ENCODE measurements at regions of chr3 and their contacts with region 1.

Region 1: GRCh38 chr3:20511863-20512505 is 326.0 kb upstream of the SGO1 start:
- DNase-seq: no peak
- ATAC-seq: peak; percentile 98
- H3K4me3 ChIP-seq: no peak overlapping the region
- H3K27ac ChIP-seq: no peak overlapping the region
- H3K4me1 ChIP-seq: no peaks in the 10 kb centered on the region
- H3K27me3 ChIP-seq: no peaks in the 10 kb centered on the region
- CTCF ChIP-seq: peak; percentile 64 to 67 (median 67); a peak in 5 of 6 replicates
- EP300 ChIP-seq: no peak
- POLR2A ChIP-seq: no peak
- RAD21 ChIP-seq: peak; percentile 86

Region 2: DNA sequence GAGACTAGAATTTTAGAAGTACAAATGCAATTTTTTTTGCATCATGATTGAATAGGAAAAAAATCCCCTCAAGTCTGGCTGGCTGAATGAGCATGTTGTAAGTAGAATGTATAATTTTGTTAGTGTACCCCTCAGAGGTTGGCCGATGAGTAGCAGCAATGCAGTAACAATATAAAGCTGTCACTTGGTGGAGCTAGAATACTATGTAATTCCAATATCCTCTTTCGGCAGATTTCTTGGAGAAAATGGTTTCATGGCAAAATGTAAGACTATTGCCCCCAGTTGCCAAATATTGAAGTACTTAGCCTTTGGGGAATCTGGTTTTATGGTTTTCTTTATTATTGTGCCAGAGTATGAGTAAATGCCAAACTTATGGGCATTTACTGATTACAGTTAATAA is 286.2 kb before region 1 on chr3:
- CTCF ChIA-PET with region 1: interaction called, 3 read pairs
- POLR2A ChIA-PET with region 1: no interaction called
- RAD21 ChIA-PET with region 1: no interaction called
- SMC1A ChIA-PET with region 1: no interaction called
- in situ Hi-C with region 1: no loop called
- intact Hi-C with region 1: loop called (anchors 10 kb)
- DNase-seq: no peak
- ATAC-seq: peak; percentile 66
- H3K4me3 ChIP-seq: no peak overlapping the region
- H3K27ac ChIP-seq: no peak overlapping the region
- H3K4me1 ChIP-seq: no peaks in the 10 kb centered on the region
- H3K27me3 ChIP-seq: no peaks in the 10 kb centered on the region
- CTCF ChIP-seq: peak; percentile 25 to 52 (median 40); a peak in 4 of 6 replicates
- EP300 ChIP-seq: no peak
- POLR2A ChIP-seq: no peak
- RAD21 ChIP-seq: peak; percentile 73

Region 3: DNA sequence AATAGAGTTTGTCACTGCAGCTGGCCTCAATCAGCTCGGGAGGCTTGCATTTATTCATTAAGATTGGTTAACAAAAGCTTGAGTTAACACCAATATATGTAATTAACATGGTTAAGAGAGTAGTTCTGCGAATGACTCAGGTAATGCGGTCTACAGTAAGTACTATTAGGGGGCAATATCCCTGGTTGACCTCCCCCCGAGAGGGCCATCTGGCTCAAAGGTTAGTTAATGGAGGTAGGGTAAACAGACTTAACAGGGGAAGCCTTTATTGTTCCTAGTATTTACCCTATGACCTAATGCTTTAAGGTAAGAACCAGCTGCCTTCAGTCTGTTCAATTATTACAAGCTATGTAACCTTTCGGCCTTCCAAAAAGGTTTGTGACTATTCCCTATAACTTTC is 77.3 kb after region 1 on chr3:
- CTCF ChIA-PET with region 1: no interaction called
- POLR2A ChIA-PET with region 1: no interaction called
- RAD21 ChIA-PET with region 1: no interaction called
- SMC1A ChIA-PET with region 1: no interaction called
- in situ Hi-C with region 1: no loop called
- intact Hi-C with region 1: no loop called
- DNase-seq: no peak
- ATAC-seq: no peak
- H3K4me3 ChIP-seq: no peak overlapping the region
- H3K27ac ChIP-seq: no peak overlapping the region
- H3K4me1 ChIP-seq: no peaks in the 10 kb centered on the region
- H3K27me3 ChIP-seq: no peaks in the 10 kb centered on the region
- CTCF ChIP-seq: no peak
- EP300 ChIP-seq: no peak
- POLR2A ChIP-seq: no peak
- RAD21 ChIP-seq: no peak

Region 4: DNA sequence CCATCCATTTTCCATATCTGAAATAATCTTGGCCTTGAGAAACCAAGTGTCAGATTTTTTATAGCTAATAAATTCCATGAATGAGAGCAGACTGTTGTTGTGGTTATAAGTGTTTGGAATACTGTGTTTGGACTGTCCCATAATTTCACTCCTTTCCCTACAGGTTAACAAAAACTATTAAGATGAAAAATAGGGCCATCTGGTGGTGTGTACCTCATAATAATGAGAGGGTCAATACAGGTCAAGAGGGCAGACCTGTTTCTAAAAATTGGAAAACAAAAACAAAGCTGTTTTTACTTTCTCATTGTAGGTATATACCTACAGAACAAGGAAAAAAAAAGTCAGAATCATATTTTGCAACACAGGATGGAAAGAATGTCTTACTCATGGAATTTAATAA is 227.8 kb after region 1 on chr3:
- CTCF ChIA-PET with region 1: no interaction called
- POLR2A ChIA-PET with region 1: no interaction called
- RAD21 ChIA-PET with region 1: no interaction called
- SMC1A ChIA-PET with region 1: no interaction called
- in situ Hi-C with region 1: no loop called
- intact Hi-C with region 1: loop called (anchors 5 kb)
- DNase-seq: no peak
- ATAC-seq: no peak
- H3K4me3 ChIP-seq: no peak overlapping the region
- H3K27ac ChIP-seq: no peak overlapping the region
- H3K4me1 ChIP-seq: no peaks in the 10 kb centered on the region
- H3K27me3 ChIP-seq: no peaks in the 10 kb centered on the region
- CTCF ChIP-seq: no peak
- EP300 ChIP-seq: no peak
- POLR2A ChIP-seq: no peak
- RAD21 ChIP-seq: no peak

Region 5: GRCh38 chr3:20930034-20930433 is 418.1 kb after region 1 on chr3:
- CTCF ChIA-PET with region 1: interaction called, 6 read pairs
- POLR2A ChIA-PET with region 1: no interaction called
- RAD21 ChIA-PET with region 1: interaction called, 3 read pairs
- SMC1A ChIA-PET with region 1: no interaction called
- in situ Hi-C with region 1: no loop called
- intact Hi-C with region 1: loop called (anchors 5 kb)
- DNase-seq: no peak
- ATAC-seq: peak; percentile 38; the same call in 1 of the 3 replicates
- H3K4me3 ChIP-seq: no peak overlapping the region
- H3K27ac ChIP-seq: no peak overlapping the region
- H3K4me1 ChIP-seq: no peaks in the 10 kb centered on the region
- H3K27me3 ChIP-seq: no peaks in the 10 kb centered on the region
- CTCF ChIP-seq: peak; percentile 13 to 36 (median 32); a peak in 3 of 6 replicates
- EP300 ChIP-seq: no peak
- POLR2A ChIP-seq: no peak
- RAD21 ChIP-seq: peak; percentile 46

Region 6: DNA sequence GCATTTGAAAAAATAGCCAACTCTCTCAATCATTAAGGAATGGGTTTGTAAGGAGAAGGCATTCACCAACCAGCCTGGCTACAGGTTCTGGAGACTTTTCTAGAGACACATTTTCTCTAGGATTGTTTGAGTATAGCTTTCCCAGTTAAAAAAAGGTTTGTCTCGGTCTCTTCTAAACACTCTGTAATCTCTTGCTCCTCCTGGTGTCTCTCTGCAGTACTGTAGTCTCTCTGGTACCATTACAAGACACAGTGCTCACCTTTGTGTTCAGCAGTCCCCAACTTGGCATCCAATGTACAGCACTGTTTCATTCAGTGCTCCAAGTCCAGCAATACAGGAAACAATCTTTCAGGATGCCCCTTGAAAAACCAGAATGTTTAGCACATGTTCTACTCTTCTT is 704.6 kb after region 1 on chr3:
- CTCF ChIA-PET with region 1: no interaction called
- POLR2A ChIA-PET with region 1: no interaction called
- RAD21 ChIA-PET with region 1: no interaction called
- SMC1A ChIA-PET with region 1: no interaction called
- in situ Hi-C with region 1: no loop called
- intact Hi-C with region 1: loop called (anchors 5 kb)
- DNase-seq: no peak
- ATAC-seq: peak; percentile 61
- H3K4me3 ChIP-seq: no peak overlapping the region
- H3K27ac ChIP-seq: no peak overlapping the region
- H3K4me1 ChIP-seq: no peaks in the 10 kb centered on the region
- H3K27me3 ChIP-seq: no peaks in the 10 kb centered on the region
- CTCF ChIP-seq: peak in 2 of 3 experiments; percentile 3 to 33; a peak in 2 of 6 replicates
- EP300 ChIP-seq: no peak
- POLR2A ChIP-seq: no peak
- RAD21 ChIP-seq: 0 out of 2 replicates have a peak, but pooled peaks have one; percentile 23

Region 7: GRCh38 chr3:21484057-21484827 is 972.3 kb after region 1 on chr3:
- CTCF ChIA-PET with region 1: interaction called, 8 read pairs
- POLR2A ChIA-PET with region 1: no interaction called
- RAD21 ChIA-PET with region 1: interaction called, 5 read pairs
- SMC1A ChIA-PET with region 1: no interaction called
- in situ Hi-C with region 1: loop called (anchors 10 kb)
- intact Hi-C with region 1: loop called (anchors 2 kb)
- DNase-seq: peak; percentile 4
- ATAC-seq: peak; percentile 96
- H3K4me3 ChIP-seq: no peak overlapping the region
- H3K27ac ChIP-seq: no peak overlapping the region
- H3K4me1 ChIP-seq: no peaks in the 10 kb centered on the region
- H3K27me3 ChIP-seq: no peaks in the 10 kb centered on the region
- CTCF ChIP-seq: peak; percentile 62 to 69 (median 67)
- EP300 ChIP-seq: no peak
- POLR2A ChIP-seq: no peak
- RAD21 ChIP-seq: peak; percentile 69

Region 8: DNA sequence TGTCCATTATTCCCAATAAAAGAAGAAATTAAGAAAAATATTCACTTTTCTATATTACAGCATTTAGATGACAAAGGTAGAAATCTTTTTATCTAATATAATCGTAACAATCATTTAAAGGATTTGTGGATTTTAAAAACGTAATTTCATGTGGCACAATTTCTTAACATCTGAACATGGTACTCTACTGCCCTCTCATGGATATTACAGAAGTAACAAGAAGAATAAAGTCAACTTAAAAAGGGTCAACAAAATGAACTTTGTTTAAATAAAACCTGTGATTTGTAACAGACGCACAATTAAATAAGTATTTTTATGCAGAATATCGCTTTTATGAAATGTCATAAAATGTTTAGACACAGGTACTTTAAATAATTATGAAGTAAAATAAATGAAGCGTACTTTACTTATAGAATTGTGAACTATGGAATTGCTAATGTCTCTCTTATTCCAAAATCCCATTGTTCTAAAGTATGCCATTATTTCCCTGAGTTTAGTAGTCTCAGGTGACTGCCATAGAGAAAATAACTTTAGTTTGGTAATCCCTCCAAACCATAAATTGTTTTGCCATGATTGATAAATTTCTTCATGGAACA is 1605.9 kb after region 1 on chr3:
- CTCF ChIA-PET with region 1: interaction called, 4 read pairs
- POLR2A ChIA-PET with region 1: no interaction called
- RAD21 ChIA-PET with region 1: no interaction called
- SMC1A ChIA-PET with region 1: no interaction called
- in situ Hi-C with region 1: no loop called
- intact Hi-C with region 1: loop called (anchors 5 kb)
- DNase-seq: no peak
- ATAC-seq: no peak
- H3K4me3 ChIP-seq: no peak overlapping the region
- H3K27ac ChIP-seq: no peak overlapping the region
- H3K4me1 ChIP-seq: no peaks in the 10 kb centered on the region
- H3K27me3 ChIP-seq: no peaks in the 10 kb centered on the region
- CTCF ChIP-seq: peak in 2 of 3 experiments; percentile 39 to 40; a peak in 3 of 6 replicates
- EP300 ChIP-seq: no peak
- POLR2A ChIP-seq: no peak
- RAD21 ChIP-seq: peak; percentile 66

Measured in GM12878 (cell line).